Panc1 (cell line): ENCODE measurements at regions of chr14 and their contacts with region 1.

Region 1: DNA sequence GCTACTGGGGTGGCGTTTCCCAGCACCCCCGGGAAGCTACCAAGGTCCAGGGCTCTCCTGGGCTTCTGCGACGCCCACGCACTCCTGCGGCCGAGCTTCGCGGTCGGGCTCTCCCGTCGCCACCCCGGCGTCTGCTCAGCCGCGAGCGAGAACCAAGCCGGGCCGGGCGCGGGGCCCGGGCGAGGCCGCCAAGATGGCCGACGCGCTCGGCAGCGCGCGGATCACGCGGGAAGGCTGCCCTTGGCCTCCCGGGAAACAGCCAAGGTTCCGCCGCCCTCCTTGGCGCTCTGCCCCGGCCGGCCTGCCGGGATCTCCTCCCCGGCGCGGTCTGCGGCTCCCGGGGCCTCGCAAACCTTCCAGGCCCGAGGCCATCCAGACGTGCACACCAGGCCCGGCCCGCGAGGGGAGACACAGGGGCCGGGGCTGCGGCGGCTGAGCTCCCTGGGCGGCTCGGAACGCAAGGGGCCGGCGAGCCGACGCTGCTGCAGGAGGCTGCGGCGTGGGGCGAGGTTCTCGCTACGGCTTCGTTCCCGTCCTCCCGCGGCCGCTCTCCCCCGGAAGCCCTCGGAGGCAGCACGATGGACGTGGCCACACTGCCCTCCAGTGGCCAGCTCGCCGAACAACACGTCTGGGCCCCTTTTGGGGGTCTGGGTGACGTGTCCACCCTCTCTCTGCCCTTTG is 23.5 kb upstream of the ZFP36L1 start:
- DNase-seq: no peak
- ATAC-seq: peak; percentile 89
- H3K4me3 ChIP-seq: peak overlapping the region; percentile 31 to 43
- H3K27ac ChIP-seq: peak overlapping the region; percentile 81
- H3K4me1 ChIP-seq: peaks cover 23% of the 10 kb centered on the region
- H3K27me3 ChIP-seq: no peaks in the 10 kb centered on the region
- CTCF ChIP-seq: peak; percentile 88

Region 2: DNA sequence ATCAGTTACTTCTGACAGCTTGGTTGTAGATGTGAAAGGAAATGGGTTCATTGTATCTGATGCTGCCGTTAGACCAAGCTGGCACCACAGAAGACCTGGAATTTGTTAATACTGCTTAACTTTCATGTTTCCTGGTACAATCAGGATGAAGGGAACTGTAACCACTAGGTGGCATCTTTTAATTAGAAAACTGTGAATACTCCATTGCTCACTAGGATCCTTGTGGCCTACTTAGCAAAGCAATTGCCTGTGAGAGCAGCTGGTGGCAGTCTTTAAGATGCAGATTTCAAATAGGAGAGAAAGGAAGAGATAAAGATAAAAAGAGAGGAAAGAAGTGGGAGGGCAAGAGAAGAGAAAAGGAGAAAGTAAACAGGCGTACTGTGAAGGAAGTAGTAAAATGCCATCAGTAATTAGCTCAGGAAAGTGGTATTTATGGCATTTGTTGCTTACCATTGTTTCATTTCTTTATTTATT is 882.4 kb before region 1 on chr14:
- CTCF ChIA-PET with region 1: no interaction called
- POLR2A ChIA-PET with region 1: no interaction called
- in situ Hi-C with region 1: no loop called
- intact Hi-C with region 1: loop called (anchors 2 kb)
- DNase-seq: peak; percentile 64
- ATAC-seq: peak; percentile 91
- H3K4me3 ChIP-seq: no peak overlapping the region
- H3K27ac ChIP-seq: peak overlapping the region; percentile 49; the same call in 1 of the 2 replicates
- H3K4me1 ChIP-seq: peaks cover 9% of the 10 kb centered on the region
- H3K27me3 ChIP-seq: no peaks in the 10 kb centered on the region
- CTCF ChIP-seq: peak; percentile 64

Region 3: GRCh38 chr14:68548194-68549056 is 268.0 kb before region 1 on chr14:
- CTCF ChIA-PET with region 1: interaction called, 11 read pairs
- POLR2A ChIA-PET with region 1: no interaction called
- in situ Hi-C with region 1: no loop called
- intact Hi-C with region 1: no loop called
- DNase-seq: no peak
- ATAC-seq: peak; percentile 79
- H3K4me3 ChIP-seq: no peak overlapping the region
- H3K27ac ChIP-seq: no peak overlapping the region
- H3K4me1 ChIP-seq: peaks cover 7% of the 10 kb centered on the region; the same call in 1 of the 2 replicates
- H3K27me3 ChIP-seq: no peaks in the 10 kb centered on the region
- CTCF ChIP-seq: no peak

Region 4: DNA sequence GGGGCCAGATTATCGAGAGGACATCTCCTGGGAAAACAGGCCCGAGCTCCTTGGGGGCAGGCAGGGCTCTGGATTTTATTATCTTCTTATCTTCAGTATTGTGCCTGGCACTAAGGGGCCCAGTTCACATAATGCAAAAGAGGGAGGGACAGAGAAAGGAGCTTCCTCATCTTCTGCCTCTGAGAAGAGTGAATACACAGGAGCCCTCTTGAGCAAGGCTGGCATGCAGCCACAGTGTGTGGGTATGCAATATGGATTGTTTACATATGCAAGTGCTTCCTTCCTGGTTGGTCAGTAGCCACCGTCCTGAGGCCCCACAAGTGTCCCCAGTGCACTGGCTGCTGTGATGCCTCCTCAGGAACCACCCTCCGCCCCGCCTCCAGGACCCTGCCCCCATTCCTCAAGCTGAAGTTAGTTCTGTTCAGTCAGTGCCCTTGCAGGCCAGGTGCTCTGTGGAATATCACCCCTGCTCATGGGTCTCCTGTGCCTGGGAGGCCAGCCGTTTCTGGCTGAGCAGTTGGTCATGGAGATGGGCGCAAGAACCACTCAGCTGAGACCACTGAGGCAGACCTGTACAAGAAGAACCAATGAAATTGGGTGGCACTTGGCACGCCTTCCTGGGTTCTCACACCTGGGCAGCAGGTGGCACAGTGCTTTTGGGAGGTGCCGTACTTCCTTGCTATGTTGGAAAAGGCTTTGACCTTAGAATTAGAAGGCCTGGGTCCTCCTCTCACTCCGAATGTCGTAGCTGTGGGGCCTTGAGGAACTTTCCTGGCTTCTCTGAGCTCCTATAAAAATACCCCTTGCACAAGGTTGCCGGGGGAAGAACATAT is 197.8 kb after region 1 on chr14:
- CTCF ChIA-PET with region 1: no interaction called
- POLR2A ChIA-PET with region 1: no interaction called
- in situ Hi-C with region 1: no loop called
- intact Hi-C with region 1: no loop called
- DNase-seq: no peak
- ATAC-seq: peak; percentile 75
- H3K4me3 ChIP-seq: no peak overlapping the region
- H3K27ac ChIP-seq: no peak overlapping the region
- H3K4me1 ChIP-seq: peaks cover 5% of the 10 kb centered on the region
- H3K27me3 ChIP-seq: no peaks in the 10 kb centered on the region
- CTCF ChIP-seq: no peak

Region 5: GRCh38 chr14:69879175-69880043 is 1063.0 kb after region 1 on chr14 and contains the start of gene SMOC1:
- CTCF ChIA-PET with region 1: no interaction called
- POLR2A ChIA-PET with region 1: no interaction called
- in situ Hi-C with region 1: no loop called
- intact Hi-C with region 1: no loop called
- DNase-seq: no peak
- ATAC-seq: peak; percentile 88
- H3K4me3 ChIP-seq: peak within 1 kb of the TSS; percentile 11 to 12; a peak in 2 of 4 replicates
- H3K27ac ChIP-seq: no peak within 1 kb of the TSS
- H3K4me1 ChIP-seq: no peaks in the 10 kb centered on the region
- H3K27me3 ChIP-seq: peaks cover 9% of the 10 kb centered on the region
- CTCF ChIP-seq: no peak
- total RNA-seq, gene SMOC1: 0.46 TPM